ENCODE measurements at regions of chr15 and their contacts with region 1.

Region 1: GRCh38 chr15:73964736-73965093 is 27.4 kb downstream of the STOML1 start:
- DNase-seq: peak; percentile 29
- H3K4me3 ChIP-seq: no peak overlapping the region
- H3K27ac ChIP-seq: no peak overlapping the region
- H3K27me3 ChIP-seq: no peaks in the 10 kb centered on the region
- CTCF ChIP-seq: peak; percentile 98

Region 2: DNA sequence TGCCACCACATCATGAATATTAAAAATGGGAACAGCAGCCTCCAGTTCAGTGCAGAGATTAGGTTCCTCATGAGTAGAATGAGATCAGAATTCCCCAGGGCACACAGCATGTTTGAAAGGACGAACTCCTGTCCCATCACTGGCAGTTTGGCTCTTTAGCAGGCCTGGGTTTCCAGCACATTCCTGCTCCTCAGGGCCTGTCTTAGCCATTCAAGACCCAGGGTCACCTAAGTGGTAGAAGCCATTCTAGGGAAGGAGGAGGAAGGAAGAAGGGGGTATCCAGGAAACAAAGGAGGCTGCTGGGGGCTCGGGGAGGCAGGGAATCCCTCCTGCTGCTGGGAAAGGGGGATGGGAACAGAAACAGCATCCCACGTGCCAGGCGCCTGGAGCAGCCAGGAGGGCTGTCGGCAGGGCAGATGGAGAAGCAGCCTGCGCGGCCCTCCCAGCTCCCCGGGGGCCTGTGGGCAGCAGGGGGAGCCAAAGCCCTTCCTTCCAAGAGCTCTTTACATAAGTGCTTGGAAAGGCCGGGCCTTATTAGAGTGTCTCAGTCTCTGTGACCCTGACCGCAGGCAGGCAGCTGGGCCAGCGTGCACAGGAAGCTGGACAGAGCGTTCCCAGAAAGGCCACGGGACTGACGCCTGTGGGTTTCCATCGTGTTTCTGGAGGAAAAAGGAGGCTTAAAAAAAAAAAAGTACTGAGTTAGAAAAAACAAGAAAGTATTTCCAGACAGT is 13.7 kb before region 1 on chr15:
- CTCF ChIA-PET with region 1: interaction called, 38 read pairs
- POLR2A ChIA-PET with region 1: interaction called, 6 read pairs
- DNase-seq: peak; percentile 86
- H3K4me3 ChIP-seq: no peak overlapping the region
- H3K27ac ChIP-seq: peak overlapping the region; percentile 82
- H3K27me3 ChIP-seq: no peaks in the 10 kb centered on the region
- CTCF ChIP-seq: peak; percentile 87

Region 3: GRCh38 chr15:74047781-74048180 is 83.1 kb after region 1 on chr15:
- CTCF ChIA-PET with region 1: interaction called, 101 read pairs
- POLR2A ChIA-PET with region 1: no interaction called
- DNase-seq: no peak
- H3K4me3 ChIP-seq: no peak overlapping the region
- H3K27ac ChIP-seq: no peak overlapping the region
- H3K27me3 ChIP-seq: no peaks in the 10 kb centered on the region
- CTCF ChIP-seq: no peak

Region 4: GRCh38 chr15:74202452-74203428 is 238.0 kb after region 1 on chr15 and contains the start of gene STRA6:
- CTCF ChIA-PET with region 1: no interaction called
- POLR2A ChIA-PET with region 1: no interaction called
- DNase-seq: no peak
- H3K4me3 ChIP-seq: no peak within 1 kb of the TSS
- H3K27ac ChIP-seq: no peak within 1 kb of the TSS
- H3K27me3 ChIP-seq: peaks cover 4% of the 10 kb centered on the region
- CTCF ChIP-seq: no peak
- polyA plus RNA-seq, gene STRA6: 0.07 and 0.12 TPM in 2 replicates

Measured in AG04450 (cell line).